ENCODE measurements at regions of chr19 and their contacts with region 1.

Region 1: DNA sequence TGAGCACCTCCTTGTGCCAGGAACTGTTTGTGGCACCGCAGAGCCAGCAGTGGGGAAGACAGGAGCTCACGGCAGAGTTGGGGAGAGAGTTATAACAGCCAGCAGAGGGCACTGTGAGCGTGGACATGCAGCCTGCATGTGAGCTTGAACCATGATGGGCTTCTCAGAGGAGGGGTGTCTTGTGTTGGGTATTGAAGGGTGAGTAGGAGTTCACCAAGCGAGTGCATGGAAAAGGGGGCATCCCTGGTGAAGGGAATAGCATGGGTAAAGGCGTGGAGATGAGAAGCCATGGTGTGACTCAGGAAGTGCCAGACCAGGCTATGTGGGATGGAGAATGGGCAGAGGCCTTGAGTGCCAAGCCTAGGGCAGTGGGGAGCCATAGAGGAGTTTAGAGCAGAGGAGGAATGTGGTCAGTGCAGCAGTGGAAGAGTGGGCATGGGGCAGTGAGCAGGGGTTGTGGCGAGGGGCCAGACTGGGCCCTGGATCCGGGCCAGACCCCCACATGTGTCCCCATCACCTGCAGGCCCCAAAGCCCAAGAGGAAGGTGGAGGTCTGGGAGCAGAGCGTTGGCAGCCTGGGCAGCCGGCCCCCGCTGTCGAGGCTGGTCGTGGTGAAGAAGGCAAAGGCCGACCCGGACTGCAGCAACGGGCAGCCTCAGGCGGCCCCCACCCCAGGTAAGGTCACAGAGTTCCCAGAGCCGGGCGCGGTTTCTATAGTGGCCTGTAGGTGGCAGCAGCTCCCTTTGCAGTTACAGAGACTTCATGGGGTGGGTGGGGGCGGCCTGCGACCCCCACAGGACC is 11.8 kb upstream of the SHD start:
- DNase-seq: peak in 7 of 10 donors; percentile 28 to 60 (median 51)
- H3K4me3 ChIP-seq: no peak overlapping the region
- H3K27ac ChIP-seq: peak overlapping the region in 1 of 59 donors; percentile 13
- H3K27me3 ChIP-seq: no peaks in the 10 kb centered on the region
- CTCF ChIP-seq: peak; percentile 39 to 87 (median 78)

Region 2: GRCh38 chr19:4232958-4233853 is 34.1 kb before region 1 on chr19:
- intact Hi-C with region 1: no loop called
- DNase-seq: peak in 7 of 10 donors; percentile 17 to 54 (median 42)
- H3K4me3 ChIP-seq: peak overlapping the region in 3 of 59 donors; percentile 8 to 32 (median 22)
- H3K27ac ChIP-seq: no peak overlapping the region
- H3K27me3 ChIP-seq: peaks cover 0 to 6% (median 0%) of the 10 kb centered on the region in 45 donors
- CTCF ChIP-seq: peak in 54 of 56 donors; percentile 24 to 66 (median 53)

Region 3: DNA sequence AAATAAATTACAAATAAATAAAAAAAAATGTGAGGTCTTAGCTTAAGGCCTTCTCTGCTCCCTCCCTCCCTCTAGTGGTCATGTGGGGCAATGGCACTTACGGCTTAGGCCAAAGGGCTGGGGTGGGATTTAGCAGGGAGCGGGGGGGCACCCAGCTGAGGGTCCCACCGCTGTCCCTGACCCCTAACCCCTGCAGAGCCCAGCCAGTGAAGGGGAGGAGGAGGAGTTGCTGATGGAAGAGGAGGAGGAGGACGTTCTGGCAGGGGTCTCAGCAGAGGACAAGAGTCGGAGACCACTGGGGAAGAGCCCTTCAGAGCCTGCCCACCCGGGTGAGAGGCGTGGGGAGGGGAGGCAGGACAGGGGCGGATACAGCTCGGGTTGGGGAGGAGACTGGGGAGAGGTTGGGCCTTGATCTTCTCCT is 85.4 kb after region 1 on chr19:
- intact Hi-C with region 1: loop called (anchors 1 to 5 kb)
- DNase-seq: peak in 1 of 10 donors; percentile 55
- H3K4me3 ChIP-seq: no peak overlapping the region
- H3K27ac ChIP-seq: peak overlapping the region in 7 of 59 donors; percentile 3 to 45 (median 21)
- H3K27me3 ChIP-seq: no peaks in the 10 kb centered on the region
- CTCF ChIP-seq: peak; percentile 56 to 91 (median 80)